ENCODE measurements at regions of chr4 and their contacts with region 1.

Region 1: GRCh38 chr4:41806807-41807206 is 58.3 kb upstream of the PHOX2B start:
- DNase-seq: no peak
- H3K4me3 ChIP-seq: no peak overlapping the region
- H3K27ac ChIP-seq: no peak overlapping the region
- H3K4me1 ChIP-seq: no peaks in the 10 kb centered on the region
- H3K27me3 ChIP-seq: peaks cover 0 to 3% of the 10 kb centered on the region in 2 donors
- CTCF ChIP-seq: no peak

Region 2: DNA sequence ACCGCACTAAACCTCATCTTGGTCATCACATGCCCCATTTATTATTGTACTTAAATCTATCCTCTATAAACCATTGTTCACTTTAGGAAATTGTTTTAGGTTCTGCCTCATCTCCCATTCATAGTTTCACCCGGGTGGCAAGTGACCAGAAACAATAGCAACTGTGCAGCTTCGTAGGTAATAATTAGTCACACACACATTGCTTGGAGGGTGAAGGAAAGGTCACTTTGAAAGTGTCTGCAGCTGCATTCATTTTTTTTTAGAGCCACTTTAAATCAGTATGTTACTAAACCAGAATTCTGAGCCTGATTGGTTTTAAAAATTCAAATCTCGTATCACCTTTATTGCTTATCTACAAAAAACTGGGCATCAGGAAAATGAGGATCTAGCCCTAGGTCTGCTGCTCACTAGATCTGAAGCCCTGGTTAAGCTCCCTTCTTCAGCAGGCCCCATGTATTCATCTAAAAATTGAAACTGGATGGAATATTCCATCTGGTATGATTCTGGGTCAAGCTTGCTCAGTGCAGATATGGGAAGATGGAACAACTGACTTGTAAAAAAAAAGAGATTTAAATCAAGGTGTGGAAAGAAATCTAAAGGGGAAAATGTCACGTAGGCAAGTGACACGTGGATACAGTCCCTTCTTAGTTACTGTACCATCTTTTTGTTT is 206.4 kb before region 1 on chr4:
- intact Hi-C with region 1: no loop called
- DNase-seq: no peak
- H3K4me3 ChIP-seq: no peak overlapping the region
- H3K27ac ChIP-seq: no peak overlapping the region
- H3K4me1 ChIP-seq: peaks cover 0 to 34% (median 0%) of the 10 kb centered on the region in 4 donors
- H3K27me3 ChIP-seq: no peaks in the 10 kb centered on the region
- CTCF ChIP-seq: no peak

Region 3: GRCh38 chr4:41611881-41612871 is 194.6 kb before region 1 on chr4:
- intact Hi-C with region 1: no loop called
- DNase-seq: peak in 1 of 2 donors; percentile 32
- H3K4me3 ChIP-seq: peak overlapping the region in 1 of 2 donors; percentile 29
- H3K27ac ChIP-seq: peak overlapping the region; percentile 42 to 68
- H3K4me1 ChIP-seq: peaks cover 0 to 48% (median 23%) of the 10 kb centered on the region in 4 donors
- H3K27me3 ChIP-seq: no peaks in the 10 kb centered on the region
- CTCF ChIP-seq: no peak

Region 4: DNA sequence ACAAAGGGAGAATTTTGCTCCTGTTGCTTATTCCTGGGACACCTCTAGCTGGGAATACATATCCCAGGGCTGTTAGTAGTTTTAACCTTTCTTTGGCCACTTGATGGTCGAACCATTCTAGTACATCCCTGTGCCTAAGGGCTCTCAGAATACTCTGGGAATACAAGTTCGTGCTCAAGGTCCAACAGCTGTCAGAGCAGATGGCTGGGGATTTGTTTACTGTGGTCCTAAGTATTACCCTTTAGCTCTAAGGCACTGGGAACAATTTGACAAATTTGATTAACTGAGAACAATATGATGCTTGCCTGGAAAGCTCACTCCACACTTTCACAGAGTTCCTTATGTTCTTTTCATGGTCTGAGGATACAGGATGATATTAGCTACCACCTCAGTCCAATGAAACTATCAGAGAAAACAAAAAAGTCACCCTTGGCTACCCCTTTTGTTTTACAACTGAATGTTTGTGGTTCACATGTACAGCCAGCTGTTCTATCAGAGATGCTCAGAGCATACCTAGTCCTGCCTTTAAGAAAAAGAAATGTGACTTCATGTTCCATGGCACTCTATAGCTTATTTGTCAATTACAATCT is 10.9 kb before region 1 on chr4:
- intact Hi-C with region 1: loop called (anchors 1 kb)
- DNase-seq: no peak
- H3K4me3 ChIP-seq: no peak overlapping the region
- H3K27ac ChIP-seq: no peak overlapping the region
- H3K4me1 ChIP-seq: no peaks in the 10 kb centered on the region
- H3K27me3 ChIP-seq: peaks cover 0 to 17% of the 10 kb centered on the region in 2 donors
- CTCF ChIP-seq: no peak

Measured in tibial artery (tissue), 4 donors.